Ascending aorta (tissue), 2 donors: ENCODE measurements at regions of chr14 and their contacts with region 1.

Region 1: GRCh38 chr14:59422069-59422881 is 42.9 kb downstream of the GPR135 start:
- DNase-seq: peak in 1 of 2 donors; percentile 70
- H3K4me3 ChIP-seq: no peak overlapping the region
- H3K27ac ChIP-seq: peak overlapping the region; percentile 65 to 72
- H3K4me1 ChIP-seq: peaks cover 7 to 35% of the 10 kb centered on the region in 2 donors
- H3K27me3 ChIP-seq: no peaks in the 10 kb centered on the region
- CTCF ChIP-seq: peak in 2 of 3 experiments; percentile 14 to 28

Region 2: DNA sequence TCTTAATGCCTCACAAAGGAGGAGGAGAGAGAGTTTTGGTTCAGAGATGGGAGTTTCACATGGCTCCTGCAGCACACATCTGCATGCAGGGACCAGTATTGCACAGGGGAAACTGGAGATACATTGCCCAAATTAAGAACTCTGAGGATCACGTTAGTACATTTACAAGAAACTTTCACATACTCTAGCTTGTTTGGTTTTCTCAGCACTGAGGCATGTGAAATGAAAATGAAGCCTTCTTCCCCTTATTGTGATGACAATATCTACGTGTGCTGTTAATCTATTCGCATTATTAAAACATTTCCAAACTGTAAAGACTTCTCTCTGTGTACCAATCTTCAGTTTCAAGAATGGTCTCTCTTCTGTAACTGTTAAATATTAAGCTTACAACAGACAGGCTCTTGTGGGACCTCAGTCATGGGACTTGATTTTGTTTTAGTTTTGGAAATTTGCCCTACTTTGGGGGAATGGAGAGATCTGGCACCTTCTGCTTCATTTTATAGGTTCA is 109.1 kb before region 1 on chr14:
- intact Hi-C with region 1: loop called (anchors 5 kb)
- DNase-seq: no peak
- H3K4me3 ChIP-seq: no peak overlapping the region
- H3K27ac ChIP-seq: peak overlapping the region; percentile 46 to 55
- H3K4me1 ChIP-seq: peaks cover 11 to 43% of the 10 kb centered on the region in 2 donors
- H3K27me3 ChIP-seq: no peaks in the 10 kb centered on the region
- CTCF ChIP-seq: no peak

Region 3: GRCh38 chr14:59360923-59361794 is 61.1 kb before region 1 on chr14:
- intact Hi-C with region 1: loop called (anchors 5 kb)
- DNase-seq: no peak
- H3K4me3 ChIP-seq: no peak overlapping the region
- H3K27ac ChIP-seq: peak overlapping the region in 1 of 2 donors; percentile 33
- H3K4me1 ChIP-seq: peaks cover 7 to 36% of the 10 kb centered on the region in 2 donors
- H3K27me3 ChIP-seq: no peaks in the 10 kb centered on the region
- CTCF ChIP-seq: no peak

Region 4: DNA sequence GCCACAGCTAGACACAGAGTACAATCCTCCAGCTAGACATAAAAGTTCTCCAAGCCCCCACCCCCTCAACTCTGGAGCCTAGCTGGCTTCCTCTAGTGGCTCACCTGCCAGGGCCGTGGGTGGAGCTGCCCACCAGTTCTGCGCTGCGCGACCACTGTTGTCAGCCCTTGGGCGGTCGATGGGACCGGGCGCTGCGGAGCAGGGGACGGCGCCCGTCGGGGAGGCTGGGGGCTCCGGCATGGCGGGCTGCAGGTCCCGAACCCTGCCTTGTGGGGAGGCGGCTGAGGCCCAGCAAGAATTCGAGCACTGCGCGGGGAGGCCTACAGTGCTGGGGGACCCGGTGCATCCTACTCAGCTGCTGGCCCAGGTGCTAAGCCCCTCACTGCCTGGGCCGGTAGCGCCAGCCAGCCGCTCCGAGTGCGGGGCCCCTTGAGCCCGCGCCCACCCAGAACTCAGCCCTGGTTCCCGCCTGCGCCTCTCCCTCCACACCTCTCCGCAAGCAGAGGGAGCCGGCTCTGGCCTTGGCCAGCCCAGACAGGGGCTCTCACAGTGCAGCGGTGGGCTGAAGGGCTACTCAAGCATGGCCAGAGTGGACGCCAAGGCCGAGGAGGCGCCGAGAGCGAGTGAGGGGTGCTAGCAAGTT is 397.3 kb after region 1 on chr14:
- intact Hi-C with region 1: no loop called
- DNase-seq: no peak
- H3K4me3 ChIP-seq: no peak overlapping the region
- H3K27ac ChIP-seq: no peak overlapping the region
- H3K4me1 ChIP-seq: no peaks in the 10 kb centered on the region
- H3K27me3 ChIP-seq: no peaks in the 10 kb centered on the region
- CTCF ChIP-seq: no peak